Endothelial cell of umbilical vein (primary cell): ENCODE measurements at regions of chr1 and their contacts with region 1.

Region 1: GRCh38 chr1:203038891-203039608 is 12.8 kb downstream of the PPFIA4 start:
- DNase-seq: peak; percentile 57
- H3K4me3 ChIP-seq: no peak overlapping the region
- H3K27ac ChIP-seq: no peak overlapping the region
- H3K4me1 ChIP-seq: no peaks in the 10 kb centered on the region
- H3K27me3 ChIP-seq: peaks cover 0 to 18% of the 10 kb centered on the region in 2 experiments
- CTCF ChIP-seq: peak; percentile 86
- POLR2A ChIP-seq: no peak

Region 2: GRCh38 chr1:202888531-202889360 is 150.3 kb before region 1 on chr1 and contains the start of gene RABIF:
- CTCF ChIA-PET with region 1: no interaction called
- POLR2A ChIA-PET with region 1: no interaction called
- dilution Hi-C with region 1: no loop called
- intact Hi-C with region 1: no loop called
- DNase-seq: peak; percentile 97
- H3K4me3 ChIP-seq: peak within 1 kb of the TSS; percentile 79 to 96 (median 90)
- H3K27ac ChIP-seq: peak within 1 kb of the TSS; percentile 18
- H3K4me1 ChIP-seq: peaks cover 10% of the 10 kb centered on the region
- H3K27me3 ChIP-seq: no peaks in the 10 kb centered on the region
- CTCF ChIP-seq: no peak
- POLR2A ChIP-seq: peak; percentile 93
- total RNA-seq, gene RABIF: 13.1 and 15.8 TPM in 2 replicates

Region 3: DNA sequence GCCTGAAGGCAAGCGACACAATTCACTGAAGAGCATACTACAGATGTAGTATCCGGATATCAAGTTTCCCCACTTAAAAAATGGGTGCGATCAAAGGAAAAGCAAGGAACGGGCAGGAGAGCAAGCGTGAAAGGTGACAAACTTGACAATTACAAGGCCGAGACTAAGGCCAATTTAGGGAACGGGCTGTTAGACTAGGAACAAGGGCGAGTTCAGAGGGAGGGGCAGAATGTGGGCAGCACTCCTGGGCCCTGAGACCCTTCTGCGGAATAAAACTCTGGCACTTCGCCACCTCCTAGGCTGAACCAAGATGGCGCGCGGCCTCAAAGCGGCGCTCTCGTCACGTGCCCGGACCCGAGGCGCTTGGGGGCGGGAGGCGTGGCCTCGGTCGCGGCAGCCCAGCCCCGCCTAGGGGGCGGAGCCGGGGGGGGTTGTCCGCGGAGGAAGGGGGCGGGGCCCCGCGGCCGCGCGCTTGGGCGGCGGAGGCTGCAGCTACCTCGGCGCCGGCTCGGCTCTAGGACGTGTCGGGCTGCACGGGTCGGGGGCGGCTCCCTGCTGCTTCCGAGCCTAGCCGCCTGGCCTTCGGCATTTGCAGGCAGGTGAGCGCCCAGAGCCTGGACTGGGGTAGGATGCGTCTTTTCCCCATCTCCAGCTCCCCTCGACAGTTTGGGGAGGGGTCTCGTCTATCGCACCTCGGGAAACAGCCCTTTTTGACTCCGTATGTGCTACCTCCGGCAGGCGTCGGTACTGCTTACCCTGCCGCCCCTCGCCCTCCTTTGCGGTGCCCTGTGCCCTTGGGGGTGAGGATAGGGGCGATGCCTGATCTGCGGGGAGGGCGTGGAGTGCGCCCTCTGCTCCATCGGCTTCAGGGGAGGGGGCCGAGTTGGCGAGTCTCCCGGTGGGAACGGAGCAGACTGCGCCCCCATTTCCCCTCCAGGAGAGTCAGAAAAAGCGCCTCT is 12.7 kb before region 1 on chr1 and contains the start of gene PPFIA4:
- CTCF ChIA-PET with region 1: interaction called, 35 read pairs
- POLR2A ChIA-PET with region 1: no interaction called
- dilution Hi-C with region 1: no loop called
- intact Hi-C with region 1: no loop called
- DNase-seq: peak; percentile 78
- H3K4me3 ChIP-seq: peak within 1 kb of the TSS in 2 of 3 experiments; percentile 27 to 30
- H3K27ac ChIP-seq: no peak within 1 kb of the TSS
- H3K4me1 ChIP-seq: peaks cover 6% of the 10 kb centered on the region
- H3K27me3 ChIP-seq: peaks cover 16 to 24% of the 10 kb centered on the region in 2 experiments
- CTCF ChIP-seq: no peak
- POLR2A ChIP-seq: no peak
- total RNA-seq, gene PPFIA4: 0.16 and 0.22 TPM in 2 replicates

Region 4: DNA sequence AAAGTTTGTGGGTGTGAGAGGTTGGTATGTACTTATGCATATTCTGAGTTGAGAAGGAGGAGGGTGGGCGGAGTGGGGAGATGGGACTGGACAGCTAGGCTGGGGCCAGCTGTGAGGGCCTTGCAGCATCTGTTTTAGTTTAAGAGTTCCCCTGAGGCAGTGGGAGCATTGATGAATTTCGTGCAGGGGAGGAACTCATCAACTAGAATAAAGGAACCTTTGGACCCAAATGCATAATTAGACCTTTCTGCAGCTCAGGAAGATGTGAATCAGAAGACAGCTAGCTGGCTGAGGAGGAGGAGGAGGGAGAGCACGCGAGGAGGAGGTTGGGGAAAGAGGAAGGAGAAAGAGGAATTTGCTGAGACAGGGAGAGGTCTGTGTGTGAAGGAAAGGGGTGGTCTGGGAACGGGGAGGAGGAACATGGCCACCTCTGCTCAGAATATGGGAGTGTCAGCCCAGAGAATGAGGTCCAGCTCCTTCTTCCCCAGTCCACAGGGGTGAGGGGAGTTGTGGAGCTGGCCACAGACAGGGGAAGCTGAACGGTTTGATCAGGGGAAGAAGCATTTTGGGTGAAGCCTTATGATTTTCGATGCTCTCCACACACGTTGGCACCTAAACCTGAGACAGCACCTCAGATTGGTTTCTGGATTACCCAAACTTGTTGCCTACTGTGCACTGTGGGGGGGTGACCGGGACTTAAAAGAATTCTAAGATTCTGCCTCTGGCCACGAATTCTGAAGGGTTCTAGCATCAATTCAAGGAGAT is 19.0 kb after region 1 on chr1:
- CTCF ChIA-PET with region 1: interaction called, 33 read pairs
- POLR2A ChIA-PET with region 1: no interaction called
- dilution Hi-C with region 1: no loop called
- intact Hi-C with region 1: no loop called
- DNase-seq: no peak
- H3K4me3 ChIP-seq: no peak overlapping the region
- H3K27ac ChIP-seq: no peak overlapping the region
- H3K4me1 ChIP-seq: no peaks in the 10 kb centered on the region
- H3K27me3 ChIP-seq: peaks cover 0 to 5% of the 10 kb centered on the region in 2 experiments
- CTCF ChIP-seq: no peak
- POLR2A ChIP-seq: no peak

Region 5: DNA sequence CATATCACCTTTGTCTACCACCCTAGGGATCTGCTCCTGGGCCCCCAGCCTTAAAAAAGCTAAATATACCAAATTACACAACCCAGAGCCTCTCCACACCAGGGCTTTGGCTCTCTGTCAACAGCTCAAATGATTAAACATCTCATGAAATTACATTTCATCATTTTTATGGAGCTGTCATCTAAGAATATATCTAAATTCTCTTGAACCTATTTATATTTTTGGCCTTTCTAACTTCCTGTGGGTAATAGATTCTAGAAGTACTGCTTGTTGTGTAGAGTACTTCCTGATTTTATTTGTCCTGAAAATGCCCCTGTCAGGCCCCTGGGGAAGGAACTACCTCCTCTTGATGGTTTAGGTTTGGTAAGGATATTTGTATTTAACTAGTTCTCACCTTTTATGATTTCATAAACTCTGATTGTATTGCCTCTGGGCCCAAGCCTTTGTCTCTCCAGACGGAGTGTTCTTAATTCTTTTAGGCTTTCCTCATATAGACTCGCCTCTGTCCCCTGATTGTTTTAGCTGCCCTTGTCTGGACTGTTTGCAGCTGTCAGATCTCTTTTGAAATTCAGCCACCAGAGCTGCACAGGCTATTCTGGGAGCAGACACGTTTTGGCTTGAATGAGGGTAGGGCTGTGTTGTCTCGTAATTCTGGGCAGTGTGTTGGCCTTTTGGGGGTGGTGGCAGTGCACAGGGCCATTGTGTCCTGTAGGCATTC is 30.1 kb after region 1 on chr1:
- CTCF ChIA-PET with region 1: interaction called, 10 read pairs
- POLR2A ChIA-PET with region 1: no interaction called
- dilution Hi-C with region 1: no loop called
- intact Hi-C with region 1: no loop called
- DNase-seq: no peak
- H3K4me3 ChIP-seq: no peak overlapping the region
- H3K27ac ChIP-seq: no peak overlapping the region
- H3K4me1 ChIP-seq: no peaks in the 10 kb centered on the region
- H3K27me3 ChIP-seq: peaks cover 20 to 23% of the 10 kb centered on the region in 2 experiments
- CTCF ChIP-seq: no peak
- POLR2A ChIP-seq: no peak

Region 6: DNA sequence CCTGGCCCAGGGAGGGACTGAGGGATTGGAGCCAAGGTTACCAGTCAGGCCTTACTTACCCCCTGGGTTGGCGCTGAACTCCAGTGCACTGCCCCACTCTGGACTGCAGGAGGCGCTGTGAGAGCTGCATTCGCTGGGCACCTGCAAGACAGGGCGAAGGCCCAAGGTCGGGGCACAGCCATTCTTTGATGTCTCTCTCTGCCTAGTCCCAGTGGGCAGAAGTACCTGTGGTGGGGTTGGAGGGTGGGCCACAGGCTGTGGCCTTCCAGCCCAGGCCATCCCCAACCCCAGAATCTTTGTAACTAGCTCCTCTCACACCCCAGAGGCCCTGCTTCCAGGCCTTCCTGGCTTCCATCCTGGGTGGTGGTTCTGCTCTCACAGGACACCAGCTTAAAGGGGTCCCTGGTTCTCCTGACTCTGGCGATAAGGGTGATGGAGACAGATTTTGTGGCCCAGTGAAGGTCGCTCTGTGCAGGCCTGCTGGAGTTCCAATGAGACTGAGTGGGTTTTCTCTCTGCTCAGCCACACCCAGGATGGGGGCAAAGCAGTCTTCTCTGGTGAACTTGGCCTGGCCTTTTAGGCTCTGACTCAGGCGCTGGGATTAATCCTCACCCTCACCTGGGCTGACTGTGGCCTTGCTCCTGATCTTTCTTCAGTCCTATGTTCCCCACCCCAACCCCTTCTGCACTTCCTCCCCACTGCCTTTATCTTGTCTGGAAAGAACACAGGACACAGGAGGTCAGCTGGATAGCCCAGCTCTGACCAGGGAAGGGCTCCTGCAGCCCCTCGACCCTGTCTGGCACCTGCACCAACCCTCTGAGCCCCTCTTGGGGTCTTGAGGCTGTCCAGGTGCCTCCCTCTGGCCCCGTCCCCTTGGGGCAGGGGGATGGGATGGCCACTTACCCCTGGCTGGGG is 45.8 kb after region 1 on chr1:
- CTCF ChIA-PET with region 1: interaction called, 11 read pairs
- POLR2A ChIA-PET with region 1: no interaction called
- dilution Hi-C with region 1: no loop called
- intact Hi-C with region 1: no loop called
- DNase-seq: no peak
- H3K4me3 ChIP-seq: no peak overlapping the region
- H3K27ac ChIP-seq: no peak overlapping the region
- H3K4me1 ChIP-seq: no peaks in the 10 kb centered on the region
- H3K27me3 ChIP-seq: peaks cover 6 to 10% of the 10 kb centered on the region in 2 experiments
- CTCF ChIP-seq: peak; percentile 48 to 50
- POLR2A ChIP-seq: no peak

Region 7: DNA sequence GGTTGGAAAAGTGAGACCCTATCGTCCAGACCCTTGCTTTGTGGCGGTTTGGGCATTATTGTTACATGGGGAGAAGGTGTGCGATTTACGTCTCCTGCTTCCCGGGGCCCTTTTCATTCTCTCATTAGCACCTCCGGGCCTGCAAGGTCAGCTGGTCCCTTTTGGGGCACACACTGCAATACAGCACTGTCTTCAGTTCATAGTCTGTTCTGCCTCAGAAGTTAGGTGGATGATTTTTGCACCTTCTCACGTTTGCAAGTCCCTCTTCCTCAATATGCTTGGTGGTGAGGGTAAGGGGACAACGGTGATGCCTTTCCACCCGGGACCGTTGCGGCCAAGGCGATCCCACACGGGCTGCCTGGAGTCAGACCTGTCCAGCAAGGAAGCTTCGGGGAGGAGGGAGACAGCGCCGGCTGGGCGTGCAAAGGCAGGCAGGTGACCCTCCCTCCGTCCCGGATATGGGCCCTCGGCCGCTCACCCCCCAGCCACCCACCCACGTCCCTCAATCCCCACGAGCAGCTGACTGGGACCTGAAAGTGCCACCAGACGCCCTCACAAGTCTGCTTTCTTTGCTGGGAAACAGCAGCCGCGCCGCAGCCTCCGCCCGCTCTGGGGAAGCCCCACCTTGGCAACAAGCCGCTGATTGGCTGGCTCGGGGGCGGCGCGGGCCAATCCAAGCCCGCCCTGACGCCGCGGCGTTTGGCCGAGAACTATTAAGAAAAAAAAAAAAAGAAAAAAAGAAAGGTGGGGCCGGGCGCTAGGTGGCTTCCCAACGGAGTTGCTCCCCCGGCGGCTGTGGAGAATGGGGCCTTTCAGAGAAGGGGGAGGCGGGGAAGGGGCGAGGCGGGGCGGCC is 288.0 kb after region 1 on chr1:
- CTCF ChIA-PET with region 1: interaction called, 4 read pairs
- POLR2A ChIA-PET with region 1: no interaction called
- dilution Hi-C with region 1: no loop called
- intact Hi-C with region 1: loop called (anchors 10 kb)
- DNase-seq: peak; percentile 94
- H3K4me3 ChIP-seq: peak overlapping the region; percentile 19 to 52 (median 39)
- H3K27ac ChIP-seq: no peak overlapping the region
- H3K4me1 ChIP-seq: peaks cover 19% of the 10 kb centered on the region
- H3K27me3 ChIP-seq: peaks cover 8 to 23% of the 10 kb centered on the region in 2 experiments
- CTCF ChIP-seq: no peak
- POLR2A ChIP-seq: peak; percentile 8